GM12878 (cell line): ENCODE measurements at regions of chr11 and their contacts with region 1.

Region 1: GRCh38 chr11:133927690-133928627 is 28.8 kb downstream of the IGSF9B start:
- DNase-seq: no peak
- ATAC-seq: peak; percentile 91
- H3K4me3 ChIP-seq: no peak overlapping the region
- H3K27ac ChIP-seq: no peak overlapping the region
- H3K4me1 ChIP-seq: peaks cover 12% of the 10 kb centered on the region
- H3K27me3 ChIP-seq: no peaks in the 10 kb centered on the region
- CTCF ChIP-seq: peak; percentile 94 to 95 (median 95)
- EP300 ChIP-seq: no peak
- POLR2A ChIP-seq: no peak
- RAD21 ChIP-seq: peak; percentile 79

Region 2: DNA sequence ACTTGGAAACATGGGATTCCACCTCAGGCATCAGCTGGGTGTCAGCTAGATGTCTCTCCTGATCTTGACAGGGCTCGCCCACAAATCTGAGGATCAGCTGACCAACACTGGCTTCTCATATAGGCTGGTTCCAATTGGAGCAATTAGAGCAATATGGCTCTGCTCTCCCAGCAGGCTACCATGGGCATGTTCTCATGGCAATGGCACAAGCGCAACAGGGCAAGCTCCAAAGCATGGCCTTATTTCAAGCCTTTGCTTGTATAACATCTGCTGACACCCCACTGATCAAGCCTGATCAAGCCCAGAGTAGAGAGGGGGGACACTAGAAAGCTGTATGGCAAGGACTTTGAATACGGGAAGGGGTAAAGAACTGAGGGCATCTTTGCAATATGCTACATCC is 41.9 kb before region 1 on chr11:
- CTCF ChIA-PET with region 1: no interaction called
- POLR2A ChIA-PET with region 1: no interaction called
- RAD21 ChIA-PET with region 1: no interaction called
- SMC1A ChIA-PET with region 1: no interaction called
- in situ Hi-C with region 1: no loop called
- intact Hi-C with region 1: no loop called
- DNase-seq: no peak
- ATAC-seq: no peak
- H3K4me3 ChIP-seq: no peak overlapping the region
- H3K27ac ChIP-seq: no peak overlapping the region
- H3K4me1 ChIP-seq: no peaks in the 10 kb centered on the region
- H3K27me3 ChIP-seq: no peaks in the 10 kb centered on the region; a peak in 1 of 4 replicates
- CTCF ChIP-seq: no peak
- EP300 ChIP-seq: no peak
- POLR2A ChIP-seq: no peak
- RAD21 ChIP-seq: no peak

Region 3: DNA sequence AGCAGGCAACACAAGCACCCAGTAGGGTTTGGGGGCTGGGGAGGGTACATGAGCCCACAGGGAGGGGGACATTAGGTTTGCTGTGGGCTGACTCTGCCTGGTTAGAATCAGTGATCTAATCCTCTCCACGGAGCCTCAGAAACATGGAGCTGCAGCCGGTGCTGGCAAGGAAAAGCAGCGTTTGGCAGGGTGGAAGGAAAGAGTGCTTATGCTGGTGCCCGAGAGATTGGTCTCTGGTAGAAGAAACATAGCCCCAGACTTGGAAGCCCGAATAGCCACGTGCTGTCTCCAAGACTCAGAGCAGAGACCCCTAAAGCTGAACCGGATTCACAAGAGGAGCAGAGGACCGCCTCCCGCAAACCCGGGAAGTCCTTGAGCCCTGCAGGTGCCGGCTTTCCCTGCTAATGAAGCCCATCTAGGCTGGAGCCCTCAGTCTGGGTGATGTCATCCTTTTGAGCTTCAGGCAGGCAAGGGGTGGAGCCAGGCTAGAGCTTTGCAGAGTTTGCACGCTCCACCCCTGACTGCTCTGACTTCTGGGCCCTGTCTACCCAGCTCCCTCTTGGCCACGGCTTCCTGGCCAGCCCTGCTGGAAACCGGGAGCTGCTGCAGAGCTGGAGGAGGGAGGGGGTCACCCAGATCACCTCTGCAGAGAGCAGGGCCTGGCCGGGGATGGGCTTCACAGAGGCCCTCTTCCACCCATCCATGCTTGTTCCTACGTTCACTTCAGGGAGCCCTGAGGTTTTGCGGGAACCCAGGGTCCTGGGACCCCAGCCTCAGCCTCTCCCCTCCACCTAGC is 105.9 kb after region 1 on chr11:
- CTCF ChIA-PET with region 1: no interaction called
- POLR2A ChIA-PET with region 1: no interaction called
- RAD21 ChIA-PET with region 1: no interaction called
- SMC1A ChIA-PET with region 1: interaction called, 3 read pairs
- in situ Hi-C with region 1: no loop called
- intact Hi-C with region 1: loop called (anchors 5 kb)
- DNase-seq: no peak
- ATAC-seq: peak; percentile 74
- H3K4me3 ChIP-seq: no peak overlapping the region
- H3K27ac ChIP-seq: no peak overlapping the region
- H3K4me1 ChIP-seq: peaks cover 4% of the 10 kb centered on the region; the same call in 1 of the 2 replicates
- H3K27me3 ChIP-seq: peaks cover 0 to 2% of the 10 kb centered on the region in 2 experiments; a peak in 3 of 4 replicates
- CTCF ChIP-seq: no peak
- EP300 ChIP-seq: no peak
- POLR2A ChIP-seq: no peak
- RAD21 ChIP-seq: no peak

Region 4: GRCh38 chr11:134098566-134099184 is 170.7 kb after region 1 on chr11:
- CTCF ChIA-PET with region 1: interaction called, 14 read pairs
- POLR2A ChIA-PET with region 1: no interaction called
- RAD21 ChIA-PET with region 1: interaction called, 7 read pairs
- SMC1A ChIA-PET with region 1: interaction called, 8 read pairs
- in situ Hi-C with region 1: no loop called
- intact Hi-C with region 1: loop called (anchors 1 kb)
- DNase-seq: no peak
- ATAC-seq: peak; percentile 61
- H3K4me3 ChIP-seq: no peak overlapping the region
- H3K27ac ChIP-seq: no peak overlapping the region
- H3K4me1 ChIP-seq: no peaks in the 10 kb centered on the region
- H3K27me3 ChIP-seq: no peaks in the 10 kb centered on the region
- CTCF ChIP-seq: peak; percentile 44 to 49 (median 44); a peak in 4 of 6 replicates
- EP300 ChIP-seq: no peak
- POLR2A ChIP-seq: no peak
- RAD21 ChIP-seq: peak; percentile 33; the same call in 1 of the 2 replicates

Region 5: GRCh38 chr11:134139873-134140331 is 211.9 kb after region 1 on chr11:
- CTCF ChIA-PET with region 1: interaction called, 11 read pairs
- POLR2A ChIA-PET with region 1: no interaction called
- RAD21 ChIA-PET with region 1: interaction called, 3 read pairs
- SMC1A ChIA-PET with region 1: interaction called, 5 read pairs
- in situ Hi-C with region 1: loop called (anchors 5 kb)
- intact Hi-C with region 1: loop called (anchors 1 kb)
- DNase-seq: peak; percentile 25
- ATAC-seq: peak; percentile 93
- H3K4me3 ChIP-seq: no peak overlapping the region
- H3K27ac ChIP-seq: no peak overlapping the region
- H3K4me1 ChIP-seq: no peaks in the 10 kb centered on the region
- H3K27me3 ChIP-seq: no peaks in the 10 kb centered on the region
- CTCF ChIP-seq: peak; percentile 70 to 77 (median 72)
- EP300 ChIP-seq: no peak
- POLR2A ChIP-seq: no peak
- RAD21 ChIP-seq: peak; percentile 65